Posterior cingulate gyrus (tissue), 11 donors: ENCODE measurements at regions of chr10 and their contacts with region 1.

Region 1: DNA sequence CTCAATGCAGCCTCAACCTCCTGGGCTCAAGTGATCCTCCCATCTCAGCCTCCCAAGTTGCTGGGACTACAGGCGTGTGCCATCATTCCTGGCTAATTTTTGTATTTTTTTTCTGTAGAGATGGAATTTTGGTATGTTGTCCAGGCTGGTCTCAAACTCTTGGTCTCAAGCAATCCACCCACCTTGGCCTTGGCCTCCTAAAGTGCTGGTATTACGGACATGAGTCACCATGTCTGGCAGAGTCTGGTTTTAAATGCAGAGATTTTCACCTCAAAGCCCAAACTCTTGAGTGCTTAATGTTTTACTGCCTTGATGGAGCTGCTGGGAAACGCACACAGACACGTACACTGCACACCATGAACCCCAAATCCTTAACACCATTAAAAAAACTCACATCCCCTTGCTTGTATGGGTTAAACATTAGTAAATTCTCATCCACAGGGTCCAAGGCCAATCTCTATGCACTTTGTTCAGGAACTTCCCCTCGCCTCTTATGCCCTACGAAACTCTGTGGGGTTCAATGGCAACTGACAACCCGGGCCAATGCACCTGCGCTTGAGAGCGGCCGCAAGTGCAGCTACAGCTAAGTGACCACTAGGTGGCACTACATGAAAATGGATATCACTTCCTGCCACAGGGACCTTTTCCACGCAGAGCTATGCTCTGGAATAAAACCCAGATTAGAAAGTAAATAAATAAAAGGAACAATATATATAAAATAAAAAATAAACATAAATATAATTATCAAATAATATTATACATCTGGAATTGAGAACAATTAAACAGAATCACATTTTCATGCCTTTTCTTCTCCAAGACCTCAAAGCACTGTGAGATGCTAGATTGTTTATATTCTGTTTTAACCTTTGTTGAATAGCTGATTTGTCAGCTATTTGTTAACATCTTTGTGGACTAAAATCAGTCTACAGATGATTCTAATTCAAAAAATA is 66.9 kb upstream of the AFAP1L2 start:
- DNase-seq: peak; percentile 38 to 95 (median 67)

Region 2: GRCh38 chr10:114271779-114272167 is 199.5 kb before region 1 on chr10:
- intact Hi-C with region 1: no loop called
- DNase-seq: no peak

Region 3: DNA sequence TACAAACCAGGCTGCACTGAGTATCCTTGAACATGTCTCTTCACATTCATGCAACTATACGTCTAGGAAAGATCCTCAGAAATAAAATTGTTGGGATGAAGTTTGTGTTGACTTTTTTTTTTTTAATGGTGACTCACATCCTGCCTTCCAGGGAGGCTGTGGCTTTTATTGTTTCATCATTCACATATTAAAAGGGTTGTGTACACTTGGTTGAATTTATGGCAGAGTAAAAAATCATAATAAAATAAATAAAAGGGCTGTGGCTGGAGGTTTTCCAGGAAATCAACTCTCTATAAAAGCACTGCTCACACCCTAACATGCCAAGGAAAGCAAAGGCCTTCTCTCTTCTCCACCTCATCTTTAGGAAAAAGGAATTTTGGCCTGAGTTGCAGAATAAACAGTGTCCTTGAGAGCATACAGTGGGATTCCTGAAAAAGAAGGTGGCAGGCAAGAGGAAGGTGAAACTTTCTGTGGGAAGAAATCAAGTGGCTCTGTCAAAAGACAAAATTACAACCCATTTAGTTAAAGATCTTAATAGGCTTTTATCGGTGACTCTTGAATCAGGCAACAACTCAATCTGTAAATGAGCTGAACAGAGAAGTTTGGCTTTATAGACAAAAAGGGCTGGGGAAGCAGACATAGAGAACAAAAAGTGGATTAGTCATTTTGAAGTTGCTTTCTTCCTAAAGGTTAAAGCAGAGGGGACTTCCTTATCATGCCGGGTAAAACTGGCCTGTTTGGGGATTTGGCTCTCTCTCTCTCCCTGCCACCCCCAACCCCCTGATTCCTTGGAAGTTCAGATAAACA is 308.8 kb after region 1 on chr10:
- intact Hi-C with region 1: loop called (anchors 5 kb)
- DNase-seq: no peak

Region 4: GRCh38 chr10:115129752-115130151 is 658.5 kb after region 1 on chr10:
- intact Hi-C with region 1: loop called (anchors 5 kb)
- DNase-seq: no peak